MCF 10A (cell line): ENCODE measurements at regions of chr1 and their contacts with region 1.

Region 1: DNA sequence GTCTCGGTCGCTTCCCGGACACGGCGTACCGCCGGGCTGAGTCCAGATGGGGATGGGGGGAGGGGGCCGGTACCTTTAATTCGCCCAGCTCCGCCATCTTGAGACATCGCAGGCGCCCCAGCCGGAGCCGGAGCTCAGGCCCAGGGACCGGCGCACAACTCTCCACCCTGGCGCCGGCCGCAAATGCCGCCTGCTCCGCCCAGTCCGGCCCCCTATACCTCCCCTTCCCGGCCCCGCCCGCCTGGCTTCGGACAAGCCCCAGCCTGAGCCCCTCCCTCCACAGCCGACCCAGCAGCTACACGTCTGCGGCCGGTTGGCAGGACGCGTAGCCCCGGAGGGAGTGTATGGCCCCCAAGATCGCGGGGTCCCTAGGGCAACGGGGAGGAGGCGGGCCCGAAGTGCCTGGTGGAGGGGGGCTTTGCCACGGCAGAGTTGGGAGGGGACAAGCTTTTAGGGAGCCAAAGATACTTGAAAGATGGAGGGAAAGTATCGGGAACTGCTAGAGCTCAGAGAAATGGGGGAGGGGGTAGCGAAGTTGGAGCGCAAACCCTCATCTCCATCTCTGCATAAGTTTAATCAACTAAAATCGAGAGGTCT is at the start of gene PIAS3:
- DNase-seq: peak; percentile 97
- H3K4me3 Mint-ChIP-seq: peak within 1 kb of the TSS; percentile 99
- H3K27ac Mint-ChIP-seq: peak within 1 kb of the TSS; percentile 86
- H3K4me1 Mint-ChIP-seq: peaks cover 21% of the 10 kb centered on the region
- H3K27me3 Mint-ChIP-seq: no peaks in the 10 kb centered on the region
- CTCF ChIP-seq: no peak
- total RNA-seq, gene PIAS3: 34.3 and 36.9 TPM in 2 replicates

Region 2: GRCh38 chr1:145845514-145846161 is 13.4 kb before region 1 on chr1 and contains the start of gene NUDT17:
- CTCF ChIA-PET with region 1: interaction called, 184 read pairs
- POLR2A ChIA-PET with region 1: interaction called, 124 read pairs
- intact Hi-C with region 1: no loop called
- DNase-seq: peak; percentile 81
- H3K4me3 Mint-ChIP-seq: no peak within 1 kb of the TSS
- H3K27ac Mint-ChIP-seq: peak within 1 kb of the TSS; percentile 67
- H3K4me1 Mint-ChIP-seq: peaks cover 12% of the 10 kb centered on the region
- H3K27me3 Mint-ChIP-seq: no peaks in the 10 kb centered on the region
- CTCF ChIP-seq: peak; percentile 100
- total RNA-seq, gene NUDT17: 3.7 and 4.6 TPM in 2 replicates

Region 3: GRCh38 chr1:145885738-145886287 is 26.8 kb after region 1 on chr1 and contains the start of gene ANKRD35:
- CTCF ChIA-PET with region 1: interaction called, 73 read pairs
- POLR2A ChIA-PET with region 1: interaction called, 179 read pairs
- intact Hi-C with region 1: loop called (anchors 1 kb)
- DNase-seq: peak; percentile 87
- H3K4me3 Mint-ChIP-seq: peak within 1 kb of the TSS; percentile 81
- H3K27ac Mint-ChIP-seq: no peak within 1 kb of the TSS
- H3K4me1 Mint-ChIP-seq: peaks cover 19% of the 10 kb centered on the region
- H3K27me3 Mint-ChIP-seq: peaks cover 12% of the 10 kb centered on the region
- CTCF ChIP-seq: no peak
- total RNA-seq, gene ANKRD35: 0.29 TPM in 1 of 2 replicates, not detected in the other

Region 4: DNA sequence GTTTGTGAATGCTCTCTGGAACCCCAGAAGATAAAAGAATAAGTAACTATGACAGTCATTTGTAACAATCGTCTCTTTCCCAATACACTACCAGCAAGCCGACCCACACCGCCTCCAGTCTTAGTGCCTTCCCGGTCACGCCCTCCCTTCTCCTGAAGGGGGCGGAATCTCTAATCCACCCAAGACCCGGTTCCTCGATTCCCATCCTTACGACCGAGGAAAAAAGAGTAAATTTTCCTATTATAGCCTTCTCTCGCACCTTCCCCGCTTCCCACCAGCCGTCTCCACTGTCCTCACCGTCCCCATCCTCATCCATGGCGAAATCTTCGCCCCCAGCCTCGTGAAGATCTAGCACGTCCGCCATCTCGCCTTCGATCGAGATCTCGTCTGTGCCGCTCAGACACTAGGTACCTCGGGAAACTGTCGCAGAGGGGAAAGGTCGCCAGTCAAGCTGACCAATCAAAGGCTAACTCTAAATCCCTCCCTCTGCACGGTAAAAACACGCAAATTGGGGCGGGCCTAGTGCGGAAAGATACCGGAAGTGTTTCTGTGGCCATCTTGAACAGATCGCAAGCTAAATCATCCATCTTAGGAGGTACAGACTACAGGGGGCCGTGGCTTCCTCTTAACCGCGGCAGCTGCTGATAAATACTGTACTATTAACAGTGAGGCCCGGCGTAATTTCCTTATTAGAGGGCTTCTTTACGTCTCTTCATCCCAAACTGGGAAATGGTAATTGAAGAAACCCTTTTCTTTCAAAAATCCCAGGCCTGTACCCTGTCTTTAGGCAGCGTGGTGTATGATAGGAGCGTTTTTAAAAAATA is 68.3 kb after region 1 on chr1 and contains the start of gene RBM8A:
- CTCF ChIA-PET with region 1: interaction called, 9 read pairs
- POLR2A ChIA-PET with region 1: interaction called, 49 read pairs
- intact Hi-C with region 1: no loop called
- DNase-seq: peak; percentile 100
- H3K4me3 Mint-ChIP-seq: no peak within 1 kb of the TSS
- H3K27ac Mint-ChIP-seq: no peak within 1 kb of the TSS
- H3K4me1 Mint-ChIP-seq: peaks cover 14% of the 10 kb centered on the region
- H3K27me3 Mint-ChIP-seq: no peaks in the 10 kb centered on the region
- CTCF ChIP-seq: peak; percentile 76
- total RNA-seq, gene RBM8A: 370 and 403 TPM in 2 replicates

Region 5: DNA sequence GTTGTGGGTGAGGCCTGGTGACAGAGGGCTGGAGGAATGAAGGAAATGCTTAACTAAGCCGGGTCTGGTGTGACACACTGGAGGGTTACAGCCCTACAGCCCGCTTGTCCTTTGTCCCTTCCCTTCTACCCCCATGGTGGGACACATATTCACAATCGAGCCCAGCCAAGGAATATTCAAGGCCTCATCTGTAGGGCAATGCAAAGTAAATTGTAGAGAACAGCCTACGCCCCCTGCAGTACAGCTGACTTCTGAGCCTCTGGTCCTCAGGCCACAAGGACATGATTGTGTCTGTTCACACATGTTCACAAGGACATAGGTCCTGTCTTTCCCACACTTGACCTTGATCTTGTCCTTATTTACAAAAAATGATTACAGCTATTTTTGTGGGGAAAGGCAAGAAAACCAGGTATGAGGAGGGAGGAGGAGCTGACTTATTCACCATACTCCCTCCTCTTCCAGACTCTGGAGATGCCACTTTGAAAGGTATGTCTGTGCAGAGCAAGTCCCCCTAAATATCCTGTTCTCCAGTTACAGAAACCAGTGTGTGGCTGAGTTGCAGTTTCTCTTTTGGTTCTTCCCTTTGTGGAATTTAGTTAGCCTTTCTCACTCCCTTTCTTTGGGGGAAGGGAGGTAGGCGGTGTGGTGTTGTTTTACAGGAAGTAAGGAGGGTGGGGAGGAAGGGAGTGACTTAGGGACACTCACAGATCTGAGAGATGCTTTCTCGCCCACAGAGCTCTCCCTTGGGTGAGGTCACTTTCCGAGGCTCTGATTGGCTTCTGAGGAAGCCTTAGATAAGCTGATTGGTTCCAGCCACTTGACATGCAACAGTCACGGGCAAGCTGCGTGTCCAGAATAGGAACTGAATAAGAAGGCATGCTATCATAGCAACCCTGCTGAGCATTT is 120.1 kb after region 1 on chr1:
- CTCF ChIA-PET with region 1: interaction called, 3 read pairs
- POLR2A ChIA-PET with region 1: interaction called, 25 read pairs
- intact Hi-C with region 1: loop called (anchors 10 kb)
- DNase-seq: peak; percentile 100
- H3K4me3 Mint-ChIP-seq: no peak overlapping the region
- H3K27ac Mint-ChIP-seq: no peak overlapping the region
- H3K4me1 Mint-ChIP-seq: peaks cover 11% of the 10 kb centered on the region
- H3K27me3 Mint-ChIP-seq: no peaks in the 10 kb centered on the region
- CTCF ChIP-seq: peak; percentile 18

Region 6: DNA sequence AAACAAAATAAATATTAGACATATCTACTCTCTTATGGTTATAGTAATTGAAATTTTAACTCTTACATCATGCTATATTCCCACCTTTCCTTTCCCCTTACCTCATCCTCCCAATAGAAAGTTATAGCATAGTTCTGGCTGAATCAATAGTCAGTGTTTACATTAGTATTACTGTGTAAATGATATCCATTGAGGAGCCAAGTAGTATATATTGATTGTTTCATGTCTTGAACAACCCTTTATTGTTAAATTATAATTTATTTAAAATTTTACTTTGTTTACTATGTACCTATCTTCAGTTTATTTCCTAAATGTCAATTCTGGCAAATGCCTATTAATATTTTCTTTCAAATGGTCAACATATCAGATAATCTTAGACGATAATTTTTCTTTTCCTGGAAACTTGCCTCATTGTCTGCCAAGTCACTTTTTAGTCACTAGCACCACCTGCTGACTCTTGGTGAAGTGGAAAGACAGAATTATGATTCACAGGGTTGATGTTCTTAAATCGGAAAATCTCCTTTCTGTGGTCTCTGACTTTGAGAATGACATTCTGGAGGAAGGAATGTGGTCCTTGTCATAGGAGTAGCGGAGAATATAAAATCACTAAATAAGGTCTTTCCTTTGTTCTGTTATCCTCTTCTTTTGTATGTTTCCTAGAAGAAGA is 153.9 kb after region 1 on chr1:
- CTCF ChIA-PET with region 1: interaction called, 8 read pairs
- POLR2A ChIA-PET with region 1: interaction called, 12 read pairs
- intact Hi-C with region 1: loop called (anchors 5 kb)
- DNase-seq: peak; percentile 87
- H3K4me3 Mint-ChIP-seq: no peak overlapping the region
- H3K27ac Mint-ChIP-seq: no peak overlapping the region
- H3K4me1 Mint-ChIP-seq: peaks cover 9% of the 10 kb centered on the region
- H3K27me3 Mint-ChIP-seq: no peaks in the 10 kb centered on the region
- CTCF ChIP-seq: peak; percentile 89